MCF 10A (cell line): ENCODE measurements at regions of chr3 and their contacts with region 1.

Region 1: GRCh38 chr3:138051946-138052802 is 42.2 kb downstream of the CLDN18 start:
- DNase-seq: peak; percentile 67
- H3K4me3 Mint-ChIP-seq: no peak overlapping the region
- H3K27ac Mint-ChIP-seq: no peak overlapping the region
- H3K4me1 Mint-ChIP-seq: no peaks in the 10 kb centered on the region
- H3K27me3 Mint-ChIP-seq: no peaks in the 10 kb centered on the region
- CTCF ChIP-seq: peak; percentile 86

Region 2: GRCh38 chr3:137110484-137110883 is 941.7 kb before region 1 on chr3:
- CTCF ChIA-PET with region 1: interaction called, 20 read pairs
- POLR2A ChIA-PET with region 1: no interaction called
- intact Hi-C with region 1: loop called (anchors 1 kb)
- DNase-seq: peak; percentile 50
- H3K4me3 Mint-ChIP-seq: no peak overlapping the region
- H3K27ac Mint-ChIP-seq: no peak overlapping the region
- H3K4me1 Mint-ChIP-seq: no peaks in the 10 kb centered on the region
- H3K27me3 Mint-ChIP-seq: no peaks in the 10 kb centered on the region
- CTCF ChIP-seq: peak; percentile 77

Region 3: DNA sequence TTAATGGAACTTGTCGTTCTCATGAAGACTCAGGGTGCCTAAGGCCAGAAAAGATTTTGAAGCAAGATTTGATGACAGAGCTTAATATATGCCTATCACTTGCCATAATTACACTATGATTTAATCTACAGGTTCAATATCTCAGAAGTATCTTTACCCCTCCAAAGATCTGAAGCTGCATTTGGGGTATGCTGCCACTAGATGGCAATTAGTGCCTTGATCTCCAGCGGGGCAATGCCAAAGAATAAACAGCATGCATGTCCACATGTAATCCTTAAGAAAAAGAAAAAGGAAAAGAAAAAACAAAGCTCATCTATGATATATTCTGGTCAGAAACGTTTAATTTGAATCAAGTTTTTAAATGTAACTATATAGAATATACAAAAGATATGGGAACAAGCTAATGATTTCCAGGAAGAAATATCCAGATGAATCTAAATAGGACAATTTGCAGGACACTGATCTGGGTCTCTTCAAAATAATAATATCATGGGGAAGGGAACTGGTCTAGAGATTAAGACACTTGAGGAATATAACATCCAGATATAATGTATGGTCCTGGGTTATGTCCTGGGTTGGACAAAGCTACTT is 343.1 kb before region 1 on chr3:
- CTCF ChIA-PET with region 1: interaction called, 13 read pairs
- POLR2A ChIA-PET with region 1: no interaction called
- intact Hi-C with region 1: loop called (anchors 1 kb)
- DNase-seq: peak; percentile 46
- H3K4me3 Mint-ChIP-seq: no peak overlapping the region
- H3K27ac Mint-ChIP-seq: no peak overlapping the region
- H3K4me1 Mint-ChIP-seq: no peaks in the 10 kb centered on the region
- H3K27me3 Mint-ChIP-seq: peaks cover 54% of the 10 kb centered on the region
- CTCF ChIP-seq: peak; percentile 65

Region 4: DNA sequence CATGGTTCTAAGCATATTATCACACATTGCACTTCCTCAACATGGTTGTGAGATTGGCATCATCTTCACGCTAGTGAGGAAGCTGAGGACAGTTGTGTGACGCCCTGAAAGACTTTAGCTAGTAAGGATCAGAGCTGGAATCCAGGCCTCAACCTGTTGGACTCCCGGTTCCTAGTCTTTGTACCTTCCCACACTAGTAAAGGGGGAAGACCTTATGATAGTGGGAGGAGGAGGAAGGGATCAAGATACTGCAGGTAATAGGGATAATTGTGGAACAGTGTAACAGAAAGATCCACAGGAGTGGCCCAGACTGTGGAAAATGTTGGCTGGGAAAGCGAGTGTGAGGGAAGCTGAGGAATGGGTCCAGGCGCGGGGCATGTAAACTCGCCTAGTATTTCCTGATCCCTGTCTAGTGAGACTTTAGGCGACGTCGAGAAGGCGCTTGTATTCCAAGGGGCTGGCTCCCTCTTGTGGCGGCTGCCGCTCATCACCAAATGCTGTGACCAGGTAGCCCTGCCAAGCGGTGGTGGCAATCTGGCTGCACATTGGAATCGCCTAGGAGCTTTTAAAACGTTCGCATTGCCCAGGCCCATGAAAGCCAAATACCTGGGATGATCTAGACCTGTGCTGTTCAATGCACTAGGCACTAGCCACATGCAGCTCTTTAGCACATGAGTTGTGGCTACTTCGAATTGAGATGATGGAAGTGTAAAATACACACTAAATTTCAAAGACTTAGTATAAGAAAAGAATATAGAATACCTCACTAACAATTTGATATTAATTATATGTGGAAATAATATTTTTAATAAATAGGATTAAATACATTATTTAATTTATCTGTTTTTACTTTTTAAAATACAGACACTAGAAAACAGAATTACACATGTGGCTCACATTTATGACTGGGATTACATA is 81.0 kb before region 1 on chr3:
- CTCF ChIA-PET with region 1: interaction called, 20 read pairs
- POLR2A ChIA-PET with region 1: no interaction called
- intact Hi-C with region 1: loop called (anchors 1 kb)
- DNase-seq: peak; percentile 80
- H3K4me3 Mint-ChIP-seq: no peak overlapping the region
- H3K27ac Mint-ChIP-seq: no peak overlapping the region
- H3K4me1 Mint-ChIP-seq: no peaks in the 10 kb centered on the region
- H3K27me3 Mint-ChIP-seq: no peaks in the 10 kb centered on the region
- CTCF ChIP-seq: peak; percentile 88

Region 5: GRCh38 chr3:138068579-138069174 is 16.5 kb after region 1 on chr3:
- CTCF ChIA-PET with region 1: interaction called, 53 read pairs
- POLR2A ChIA-PET with region 1: no interaction called
- intact Hi-C with region 1: no loop called
- DNase-seq: peak; percentile 82
- H3K4me3 Mint-ChIP-seq: no peak overlapping the region
- H3K27ac Mint-ChIP-seq: no peak overlapping the region
- H3K4me1 Mint-ChIP-seq: no peaks in the 10 kb centered on the region
- H3K27me3 Mint-ChIP-seq: no peaks in the 10 kb centered on the region
- CTCF ChIP-seq: peak; percentile 98